PC-3 (cell line): ENCODE measurements at regions of chr1 and their contacts with region 1.

Region 1: DNA sequence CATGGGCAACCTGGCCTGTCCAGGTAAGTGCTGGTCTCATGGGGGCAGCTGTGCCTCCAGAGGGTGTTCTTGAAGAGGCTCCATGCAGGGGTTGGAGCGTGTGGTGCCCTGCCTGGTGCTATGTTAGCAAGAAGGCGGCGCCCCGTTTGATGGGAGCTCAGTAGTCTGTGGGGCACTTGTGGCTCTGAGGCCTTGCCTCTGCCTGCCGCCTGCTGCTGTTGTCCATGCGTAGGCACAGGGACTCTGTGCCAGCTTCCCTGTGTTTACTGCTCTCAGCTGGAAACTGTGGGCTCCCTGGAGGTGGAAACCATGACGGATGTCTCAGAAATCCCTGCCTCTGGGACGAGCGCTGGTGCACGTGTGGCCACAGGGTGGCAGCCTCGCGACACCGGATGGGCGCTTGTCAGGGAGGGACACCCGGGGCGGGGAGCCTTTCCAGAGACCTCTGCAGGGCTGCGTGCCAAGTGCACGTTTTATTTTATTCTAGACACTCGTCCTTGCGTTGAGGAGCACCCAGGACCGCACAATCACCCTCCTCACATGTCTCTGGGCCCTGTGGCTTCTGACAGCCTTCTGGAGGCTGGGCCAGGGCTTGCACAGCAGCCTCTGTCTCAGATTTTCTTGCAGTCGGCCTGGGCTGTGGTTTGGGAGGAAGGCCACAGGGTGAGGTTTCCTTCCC is 27.1 kb downstream of the SNAP47 start:
- DNase-seq: peak; percentile 97
- ATAC-seq: peak; percentile 35
- H3K4me3 ChIP-seq: no peak overlapping the region
- H3K27ac ChIP-seq: peak overlapping the region; percentile 62
- H3K4me1 ChIP-seq: peaks cover 77% of the 10 kb centered on the region
- H3K27me3 ChIP-seq: no peaks in the 10 kb centered on the region
- CTCF ChIP-seq: peak; percentile 100

Region 2: GRCh38 chr1:227728059-227728891 is 34.1 kb before region 1 on chr1:
- CTCF ChIA-PET with region 1: interaction called, 10 read pairs
- POLR2A ChIA-PET with region 1: interaction called, 3 read pairs
- intact Hi-C with region 1: no loop called
- DNase-seq: peak; percentile 98
- ATAC-seq: peak; percentile 89
- H3K4me3 ChIP-seq: peak overlapping the region; percentile 82
- H3K27ac ChIP-seq: peak overlapping the region; percentile 29
- H3K4me1 ChIP-seq: peaks cover 19% of the 10 kb centered on the region
- H3K27me3 ChIP-seq: no peaks in the 10 kb centered on the region
- CTCF ChIP-seq: 0 out of 2 replicates have a peak, but pooled peaks have one; percentile 14

Region 3: GRCh38 chr1:227787513-227788270 is 25.3 kb after region 1 on chr1:
- CTCF ChIA-PET with region 1: interaction called, 13 read pairs
- POLR2A ChIA-PET with region 1: interaction called, 3 read pairs
- intact Hi-C with region 1: loop called (anchors 1 kb)
- DNase-seq: peak; percentile 100
- ATAC-seq: peak; percentile 84
- H3K4me3 ChIP-seq: peak overlapping the region; percentile 67
- H3K27ac ChIP-seq: no peak overlapping the region
- H3K4me1 ChIP-seq: peaks cover 18% of the 10 kb centered on the region
- H3K27me3 ChIP-seq: no peaks in the 10 kb centered on the region
- CTCF ChIP-seq: no peak

Region 4: GRCh38 chr1:227934476-227935313 is 172.3 kb after region 1 on chr1:
- CTCF ChIA-PET with region 1: interaction called, 5 read pairs
- POLR2A ChIA-PET with region 1: no interaction called
- intact Hi-C with region 1: loop called (anchors 1 kb)
- DNase-seq: peak; percentile 100
- ATAC-seq: peak; percentile 87
- H3K4me3 ChIP-seq: peak overlapping the region; percentile 25
- H3K27ac ChIP-seq: peak overlapping the region; percentile 94
- H3K4me1 ChIP-seq: peaks cover 49% of the 10 kb centered on the region
- H3K27me3 ChIP-seq: no peaks in the 10 kb centered on the region
- CTCF ChIP-seq: no peak

Region 5: GRCh38 chr1:227954163-227954850 is 191.9 kb after region 1 on chr1:
- CTCF ChIA-PET with region 1: interaction called, 15 read pairs
- POLR2A ChIA-PET with region 1: no interaction called
- intact Hi-C with region 1: no loop called
- DNase-seq: no peak
- ATAC-seq: no peak
- H3K4me3 ChIP-seq: no peak overlapping the region
- H3K27ac ChIP-seq: no peak overlapping the region
- H3K4me1 ChIP-seq: peaks cover 11% of the 10 kb centered on the region
- H3K27me3 ChIP-seq: no peaks in the 10 kb centered on the region
- CTCF ChIP-seq: 0 out of 2 replicates have a peak, but pooled peaks have one; percentile 3